Activated CD4-positive, alpha-beta T cell treated with anti-CD3 and anti-CD28 coated beads, Interleukin-2, amount 10 ng/mL, durations not matched to agents 24 days and 14 days (primary cell): ENCODE measurements at regions of chr1 and their contacts with region 1.

Region 1: GRCh38 chr1:45569962-45570581 is 13.8 kb upstream of the NASP start:
- DNase-seq: peak; percentile 92
- H3K4me3 Mint-ChIP-seq: no peak overlapping the region
- H3K27ac Mint-ChIP-seq: peak overlapping the region; percentile 63
- H3K4me1 Mint-ChIP-seq: peaks cover 2% of the 10 kb centered on the region
- H3K27me3 Mint-ChIP-seq: no peaks in the 10 kb centered on the region

Region 2: GRCh38 chr1:45359882-45360513 is 210.1 kb before region 1 on chr1:
- intact Hi-C with region 1: loop called (anchors 1 kb)
- DNase-seq: peak; percentile 82
- H3K4me3 Mint-ChIP-seq: no peak overlapping the region
- H3K27ac Mint-ChIP-seq: no peak overlapping the region
- H3K4me1 Mint-ChIP-seq: peaks cover 6% of the 10 kb centered on the region
- H3K27me3 Mint-ChIP-seq: no peaks in the 10 kb centered on the region

Region 3: DNA sequence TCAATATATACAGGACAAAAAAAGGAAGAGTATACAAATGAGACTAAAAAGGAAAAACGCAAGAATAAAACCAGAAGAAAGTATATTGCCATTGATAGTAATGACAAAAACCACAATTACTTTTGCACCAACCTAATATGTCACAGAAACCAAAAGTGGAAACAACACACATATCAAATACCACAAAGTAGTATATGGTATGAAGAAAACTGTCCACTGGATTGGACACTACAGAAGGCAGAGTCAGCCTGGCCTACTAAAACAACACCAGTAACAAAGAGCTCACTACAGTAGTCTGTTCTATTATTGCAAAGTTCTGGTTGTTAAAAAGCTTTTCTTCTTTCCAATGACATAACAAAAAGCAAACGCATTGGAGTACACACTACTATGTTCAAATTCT is 96.8 kb before region 1 on chr1:
- intact Hi-C with region 1: no loop called
- DNase-seq: no peak
- H3K4me3 Mint-ChIP-seq: no peak overlapping the region
- H3K27ac Mint-ChIP-seq: no peak overlapping the region
- H3K4me1 Mint-ChIP-seq: no peaks in the 10 kb centered on the region
- H3K27me3 Mint-ChIP-seq: no peaks in the 10 kb centered on the region

Region 4: DNA sequence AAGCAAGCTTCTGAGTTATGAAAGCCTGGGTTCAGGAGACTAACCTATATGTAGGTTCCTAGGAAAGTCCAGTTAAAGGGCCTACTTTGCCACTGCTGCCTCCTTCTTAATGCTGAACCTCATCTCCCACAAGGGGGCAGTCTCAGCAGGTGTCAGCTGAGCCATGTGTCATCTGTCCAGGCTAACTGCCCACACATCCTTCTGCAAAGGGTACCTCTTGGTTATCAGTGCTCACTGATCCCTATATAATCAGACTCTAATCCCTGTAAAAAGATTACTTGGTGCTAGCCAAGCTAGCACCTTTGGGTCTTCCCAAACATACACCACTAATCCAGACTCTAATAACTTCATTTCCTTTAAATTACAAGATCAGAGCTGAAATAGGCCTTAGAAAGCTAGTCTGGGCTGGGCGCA is 57.4 kb before region 1 on chr1:
- intact Hi-C with region 1: loop called (anchors 1 kb)
- DNase-seq: peak; percentile 89
- H3K4me3 Mint-ChIP-seq: no peak overlapping the region
- H3K27ac Mint-ChIP-seq: peak overlapping the region; percentile 48
- H3K4me1 Mint-ChIP-seq: peaks cover 31% of the 10 kb centered on the region
- H3K27me3 Mint-ChIP-seq: no peaks in the 10 kb centered on the region

Region 5: DNA sequence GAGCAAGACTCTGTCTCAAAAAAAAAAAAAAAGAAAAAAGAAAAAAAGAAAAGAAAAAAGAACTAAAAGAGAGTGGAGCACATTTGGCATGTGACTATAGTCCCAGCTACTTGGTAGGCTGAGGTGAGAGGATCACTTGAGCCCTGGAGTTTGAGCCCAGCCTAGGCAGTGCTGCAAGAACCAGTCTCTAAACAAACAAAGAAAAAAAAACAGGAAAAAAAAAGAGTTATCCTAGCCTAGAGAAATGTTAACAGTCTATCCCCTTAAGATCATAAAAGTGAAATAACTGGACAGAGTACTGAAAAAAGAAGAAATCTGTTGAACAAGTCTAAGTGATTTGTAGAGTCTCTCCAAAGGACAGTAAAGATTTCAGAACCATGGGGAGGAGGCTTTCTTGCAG is 43.9 kb before region 1 on chr1:
- intact Hi-C with region 1: no loop called
- DNase-seq: no peak
- H3K4me3 Mint-ChIP-seq: no peak overlapping the region
- H3K27ac Mint-ChIP-seq: no peak overlapping the region
- H3K4me1 Mint-ChIP-seq: peaks cover 19% of the 10 kb centered on the region
- H3K27me3 Mint-ChIP-seq: peaks cover 3% of the 10 kb centered on the region

Region 6: GRCh38 chr1:45550401-45551351 is 19.4 kb before region 1 on chr1 and contains the start of gene AKR1A1:
- intact Hi-C with region 1: loop called (anchors 2 kb)
- DNase-seq: peak; percentile 97
- H3K4me3 Mint-ChIP-seq: peak within 1 kb of the TSS; percentile 98
- H3K27ac Mint-ChIP-seq: peak within 1 kb of the TSS; percentile 94
- H3K4me1 Mint-ChIP-seq: peaks cover 17% of the 10 kb centered on the region
- H3K27me3 Mint-ChIP-seq: no peaks in the 10 kb centered on the region
- total RNA-seq, gene AKR1A1: 193 and 199 TPM in 2 replicates